Posterior vena cava (tissue), 2 donors: ENCODE measurements at regions of chr12 and their contacts with region 1.

Region 1: DNA sequence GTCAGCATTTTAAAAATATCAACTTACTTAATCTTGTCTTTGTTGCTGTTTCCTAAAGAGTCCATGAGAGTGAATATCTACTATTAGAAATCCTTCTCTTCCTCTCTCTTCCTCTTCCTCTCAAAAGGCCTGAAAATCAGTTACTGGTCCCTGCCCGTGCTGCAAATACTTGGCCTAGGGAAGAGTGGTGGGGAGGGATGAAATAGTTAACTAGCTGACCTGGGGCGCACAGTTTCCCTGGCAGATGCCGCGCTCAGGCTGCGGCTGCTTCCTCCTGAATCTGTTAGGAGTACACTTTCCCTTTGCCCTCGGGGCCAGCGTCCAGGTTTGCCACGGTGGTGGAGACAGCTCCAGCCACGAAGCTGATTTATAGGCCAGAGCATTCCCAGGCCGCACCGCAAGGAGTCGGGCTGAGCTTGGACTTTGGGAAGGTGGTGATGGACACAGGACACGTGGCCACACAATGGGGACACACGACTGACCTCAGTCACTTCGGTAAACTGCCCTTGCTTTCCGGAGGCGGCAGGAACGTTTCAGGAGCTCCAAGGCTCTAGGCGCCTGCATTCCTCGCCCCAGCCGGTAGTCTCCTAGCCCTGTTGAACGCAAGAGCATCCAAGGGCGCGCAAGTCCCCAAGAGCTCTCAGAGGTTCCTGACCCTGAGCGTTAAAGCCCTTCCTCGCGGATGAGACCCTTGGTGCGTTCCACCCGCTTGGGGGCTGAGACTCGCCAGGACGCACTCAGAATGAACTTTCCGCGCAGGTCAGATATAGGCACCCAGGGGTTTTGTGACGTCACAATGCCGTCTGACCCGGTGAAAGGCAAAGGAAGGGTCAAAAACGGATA is 7.1 kb upstream of the ASCL1 start:
- DNase-seq: no peak

Region 2: GRCh38 chr12:101086490-101087135 is 1863.7 kb before region 1 on chr12:
- intact Hi-C with region 1: loop called in 1 of 2 experiments (anchors 5 kb)
- DNase-seq: no peak

Region 3: DNA sequence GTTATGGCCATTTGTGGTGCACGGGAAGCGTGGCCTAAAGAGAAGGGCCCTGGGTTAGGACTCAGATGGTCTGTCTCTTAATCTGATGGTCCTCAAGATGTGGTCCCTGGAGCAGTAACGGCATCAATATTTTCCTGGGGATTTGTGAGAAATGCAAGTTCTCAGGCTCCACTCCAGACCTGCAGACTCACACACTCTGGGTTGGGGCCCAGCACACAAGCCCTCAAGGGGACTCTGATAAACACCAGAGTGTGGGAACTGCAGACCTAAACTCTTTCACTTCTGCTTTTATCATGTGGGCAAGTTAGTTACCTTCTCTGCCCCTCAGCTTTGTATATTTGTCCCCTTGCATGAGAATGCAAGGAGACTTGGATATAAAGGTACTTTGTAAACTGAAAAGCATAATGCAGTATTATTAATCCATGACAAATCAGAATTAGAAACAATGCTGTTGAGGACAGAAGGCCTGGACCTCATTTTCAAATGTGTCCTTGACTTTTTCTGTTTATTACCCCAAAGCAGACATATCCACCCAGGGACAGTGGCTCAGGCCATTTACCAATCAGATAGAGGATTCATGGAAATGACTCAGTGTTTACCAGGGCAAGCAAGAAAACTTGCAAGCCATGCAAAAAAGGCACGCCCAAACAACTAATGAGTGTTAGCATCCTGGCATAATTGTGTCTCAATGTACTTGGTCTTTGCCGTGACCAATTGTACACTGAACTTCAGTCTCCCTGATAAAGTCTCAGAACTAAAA is 164.1 kb after region 1 on chr12:
- intact Hi-C with region 1: no loop called
- DNase-seq: no peak

Region 4: GRCh38 chr12:103887738-103888137 is 937.4 kb after region 1 on chr12:
- intact Hi-C with region 1: no loop called
- DNase-seq: no peak